SK-N-SH (cell line): ENCODE measurements at regions of chr6 and their contacts with region 1.

Region 1: GRCh38 chr6:97437087-97437486 is 154.1 kb upstream of the MMS22L start:
- DNase-seq: peak; percentile 42
- H3K4me3 ChIP-seq: peak overlapping the region in 1 of 2 experiments; percentile 5; a peak in 1 of 4 replicates
- H3K27ac ChIP-seq: no peak overlapping the region
- H3K4me1 ChIP-seq: no peaks in the 10 kb centered on the region; a peak in 2 of 4 replicates
- H3K27me3 ChIP-seq: no peaks in the 10 kb centered on the region
- CTCF ChIP-seq: peak; percentile 85
- EP300 ChIP-seq: no peak
- RAD21 ChIP-seq: peak; percentile 59; the same call in 1 of the 2 replicates

Region 2: DNA sequence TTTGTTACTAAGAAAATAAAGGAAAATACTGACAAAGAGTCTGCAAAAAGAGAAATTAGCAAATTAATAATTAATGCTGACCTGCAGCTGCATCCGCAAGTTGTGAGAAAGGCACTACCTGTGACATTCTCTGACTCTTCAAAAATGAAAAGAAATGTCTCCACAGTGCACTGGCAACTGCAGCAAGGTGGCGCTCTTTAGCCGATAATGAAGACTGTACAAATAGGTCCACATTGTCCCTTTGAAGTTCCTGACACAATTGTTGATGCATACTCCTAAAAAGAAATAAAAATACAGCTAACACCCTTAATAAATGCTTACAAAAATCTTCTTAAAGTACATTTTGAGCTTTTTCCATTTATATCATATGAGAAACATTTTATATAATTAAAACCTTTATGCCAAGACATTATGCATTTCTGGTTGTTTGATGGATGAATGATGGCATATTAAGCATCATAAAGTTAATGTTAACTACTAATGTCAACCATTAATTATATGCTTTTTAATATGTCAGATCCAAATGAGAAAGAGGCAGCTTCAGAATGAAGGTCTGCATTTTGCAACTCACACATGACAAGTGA is 250.6 kb before region 1 on chr6:
- CTCF ChIA-PET with region 1: interaction called, 15 read pairs
- POLR2A ChIA-PET with region 1: no interaction called
- DNase-seq: peak; percentile 40
- H3K4me3 ChIP-seq: no peak overlapping the region; a peak in 1 of 4 replicates
- H3K27ac ChIP-seq: no peak overlapping the region
- H3K4me1 ChIP-seq: peaks cover 5 to 18% of the 10 kb centered on the region in 2 experiments; a peak in 3 of 4 replicates
- H3K27me3 ChIP-seq: no peaks in the 10 kb centered on the region
- CTCF ChIP-seq: peak; percentile 98
- EP300 ChIP-seq: no peak
- RAD21 ChIP-seq: peak; percentile 97

Region 3: DNA sequence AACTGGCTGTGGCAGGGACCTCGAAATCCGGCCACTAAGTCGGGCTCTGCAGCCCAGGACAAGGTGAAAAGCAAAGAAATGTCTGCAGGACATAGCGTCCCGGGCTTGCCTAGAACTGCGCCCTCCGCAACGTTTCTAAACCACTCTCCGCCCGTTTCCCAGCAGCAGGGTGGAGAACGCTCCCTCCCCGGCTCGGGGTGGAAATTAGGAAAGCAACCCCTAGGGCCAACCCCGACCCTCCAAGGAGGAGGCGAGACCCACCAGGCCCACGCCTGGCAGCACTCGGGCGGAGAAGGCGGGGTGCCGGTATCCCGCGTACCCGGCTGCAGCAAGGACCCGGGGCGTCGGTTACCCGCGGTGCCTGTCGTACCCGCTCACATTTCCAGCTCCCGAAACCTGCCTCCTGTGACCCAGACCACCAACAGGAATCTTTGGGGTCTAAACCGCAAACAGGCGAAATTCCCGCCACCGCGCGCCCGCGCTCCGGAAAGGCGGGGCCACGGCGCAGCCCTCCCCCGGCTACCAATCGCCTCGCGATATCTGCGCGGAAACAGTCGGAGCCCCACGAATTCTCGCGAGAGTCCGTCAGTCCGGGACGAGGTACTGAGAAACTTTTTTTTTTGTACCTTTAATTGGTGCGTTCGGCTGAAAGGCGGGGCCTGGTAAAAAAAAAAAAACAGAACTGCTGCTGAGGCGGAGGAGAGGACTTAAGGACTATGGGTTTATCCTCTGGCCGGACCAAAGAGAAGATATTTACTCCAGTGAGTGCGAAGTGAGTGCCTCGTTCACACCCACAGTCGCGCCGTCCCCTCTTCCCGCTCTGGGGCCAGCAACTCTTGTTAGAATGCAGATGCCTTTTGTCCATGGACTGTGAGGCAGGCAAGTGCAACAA is 154.1 kb before region 1 on chr6 and contains the start of gene MMS22L:
- CTCF ChIA-PET with region 1: no interaction called
- POLR2A ChIA-PET with region 1: no interaction called
- DNase-seq: peak; percentile 94
- H3K4me3 ChIP-seq: peak within 1 kb of the TSS; percentile 91 to 94
- H3K27ac ChIP-seq: peak within 1 kb of the TSS; percentile 30 to 90
- H3K4me1 ChIP-seq: peaks cover 0 to 9% of the 10 kb centered on the region in 2 experiments; a peak in 2 of 4 replicates
- H3K27me3 ChIP-seq: no peaks in the 10 kb centered on the region
- CTCF ChIP-seq: no peak
- EP300 ChIP-seq: no peak
- RAD21 ChIP-seq: peak; percentile 7; the same call in 1 of the 2 replicates
- polyA plus RNA-seq, gene MMS22L: 4.3 and 6.3 TPM in 2 replicates

Region 4: DNA sequence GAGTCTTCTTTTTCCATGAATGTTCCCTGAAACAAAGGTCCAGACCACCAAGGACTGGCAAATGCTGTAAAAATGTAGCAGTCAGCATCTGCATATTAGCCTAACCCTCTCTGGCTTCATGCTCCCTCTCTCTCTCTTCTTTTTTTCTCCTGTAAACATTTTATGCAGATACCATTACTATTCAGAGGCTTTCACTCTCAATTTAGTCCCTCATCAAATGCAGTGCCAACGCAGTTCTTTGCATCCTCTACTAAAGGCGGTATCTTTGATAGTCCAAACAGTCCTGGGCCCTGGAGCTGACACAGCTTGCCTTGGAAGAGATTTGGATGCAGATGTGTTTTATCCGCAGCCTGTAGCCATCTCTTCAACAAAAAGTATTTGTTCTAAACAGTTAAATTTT is 13.0 kb after region 1 on chr6:
- CTCF ChIA-PET with region 1: interaction called, 14 read pairs
- POLR2A ChIA-PET with region 1: no interaction called
- DNase-seq: no peak
- H3K4me3 ChIP-seq: no peak overlapping the region
- H3K27ac ChIP-seq: no peak overlapping the region
- H3K4me1 ChIP-seq: no peaks in the 10 kb centered on the region; a peak in 1 of 4 replicates
- H3K27me3 ChIP-seq: no peaks in the 10 kb centered on the region; the same call in 1 of the 2 replicates
- CTCF ChIP-seq: no peak
- EP300 ChIP-seq: no peak
- RAD21 ChIP-seq: no peak

Region 5: GRCh38 chr6:97947841-97948240 is 510.8 kb after region 1 on chr6:
- CTCF ChIA-PET with region 1: no interaction called
- POLR2A ChIA-PET with region 1: no interaction called
- DNase-seq: peak; percentile 7
- H3K4me3 ChIP-seq: no peak overlapping the region
- H3K27ac ChIP-seq: no peak overlapping the region
- H3K4me1 ChIP-seq: peaks cover 0 to 15% of the 10 kb centered on the region in 2 experiments; a peak in 2 of 4 replicates
- H3K27me3 ChIP-seq: no peaks in the 10 kb centered on the region
- CTCF ChIP-seq: no peak
- EP300 ChIP-seq: peak in 1 of 2 experiments; percentile 42; a peak in 2 of 4 replicates
- RAD21 ChIP-seq: no peak